Posterior vena cava (tissue), 2 donors: ENCODE measurements at regions of chr20 and their contacts with region 1.

Region 1: GRCh38 chr20:48841847-48842529 is 14.2 kb upstream of the PREX1 start:
- DNase-seq: no peak

Region 2: DNA sequence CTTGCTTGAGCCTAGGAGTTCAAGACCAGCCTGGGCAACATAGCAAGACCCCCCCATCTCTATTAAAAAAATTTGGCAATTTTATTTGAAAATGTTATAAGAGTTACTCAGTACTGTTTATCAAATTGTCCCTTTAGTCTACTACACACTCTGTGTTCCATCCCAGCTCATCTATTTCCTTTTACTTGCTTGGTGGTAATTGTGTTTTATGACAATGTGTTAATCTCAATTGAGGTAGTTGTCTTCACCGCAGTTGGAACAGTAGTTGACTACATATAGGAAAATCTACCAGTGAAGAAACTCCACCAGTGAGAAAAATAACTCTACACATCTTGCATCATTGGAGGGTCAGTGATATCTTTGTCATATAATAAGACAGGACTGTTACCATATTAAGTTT is 1332.3 kb before region 1 on chr20:
- intact Hi-C with region 1: loop called in 1 of 2 experiments (anchors 5 kb)
- DNase-seq: no peak